ENCODE measurements at regions of chr1 and their contacts with region 1.

Region 1: DNA sequence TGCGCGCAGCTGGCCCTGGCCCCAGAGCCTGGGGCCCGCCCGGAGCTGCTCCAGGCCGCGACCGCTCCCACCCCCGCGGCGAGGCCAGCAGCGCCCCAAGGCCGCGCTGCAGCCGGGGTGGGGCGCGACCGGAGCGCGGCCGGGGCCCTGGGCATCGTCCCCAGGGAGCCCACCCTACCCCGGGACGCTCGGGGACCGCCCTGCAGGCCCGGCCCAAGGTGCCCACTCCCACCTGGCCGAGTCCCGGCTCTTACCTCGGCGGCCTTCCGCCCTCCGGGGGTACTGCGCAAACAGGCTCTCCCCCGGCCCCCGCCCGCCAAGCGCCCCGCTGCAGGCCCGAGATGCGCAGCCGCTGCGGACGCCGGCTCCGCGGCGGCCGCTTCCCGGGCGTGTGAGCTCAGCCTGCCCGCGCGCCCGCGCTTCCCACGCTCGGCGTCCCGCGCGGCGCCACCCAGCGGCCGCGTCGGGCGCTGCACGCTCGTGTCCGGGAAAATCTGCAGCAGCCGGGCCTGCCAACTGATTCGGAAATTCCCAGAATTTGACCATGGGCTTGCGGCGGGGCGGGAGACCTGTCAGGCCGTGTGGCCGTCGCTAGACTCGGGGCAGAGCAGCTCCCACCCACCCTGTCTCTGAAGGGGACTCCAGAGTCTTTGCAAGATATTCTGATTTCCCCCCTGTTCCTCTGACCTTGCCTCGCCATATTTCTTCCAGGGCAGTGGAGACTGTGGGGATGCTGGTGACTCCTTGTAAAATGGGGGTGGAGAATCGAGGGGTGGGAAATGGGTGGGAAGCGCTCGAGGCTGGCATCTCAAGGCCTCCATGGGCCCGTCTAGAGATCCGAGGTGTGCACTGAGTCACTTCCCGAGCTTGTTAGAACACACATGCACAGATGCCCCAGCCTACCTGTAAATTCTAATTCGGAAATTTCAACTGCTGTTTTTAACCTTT is 41.9 kb downstream of the CD34 start:
- DNase-seq: peak; percentile 92
- ATAC-seq: peak; percentile 65

Region 2: DNA sequence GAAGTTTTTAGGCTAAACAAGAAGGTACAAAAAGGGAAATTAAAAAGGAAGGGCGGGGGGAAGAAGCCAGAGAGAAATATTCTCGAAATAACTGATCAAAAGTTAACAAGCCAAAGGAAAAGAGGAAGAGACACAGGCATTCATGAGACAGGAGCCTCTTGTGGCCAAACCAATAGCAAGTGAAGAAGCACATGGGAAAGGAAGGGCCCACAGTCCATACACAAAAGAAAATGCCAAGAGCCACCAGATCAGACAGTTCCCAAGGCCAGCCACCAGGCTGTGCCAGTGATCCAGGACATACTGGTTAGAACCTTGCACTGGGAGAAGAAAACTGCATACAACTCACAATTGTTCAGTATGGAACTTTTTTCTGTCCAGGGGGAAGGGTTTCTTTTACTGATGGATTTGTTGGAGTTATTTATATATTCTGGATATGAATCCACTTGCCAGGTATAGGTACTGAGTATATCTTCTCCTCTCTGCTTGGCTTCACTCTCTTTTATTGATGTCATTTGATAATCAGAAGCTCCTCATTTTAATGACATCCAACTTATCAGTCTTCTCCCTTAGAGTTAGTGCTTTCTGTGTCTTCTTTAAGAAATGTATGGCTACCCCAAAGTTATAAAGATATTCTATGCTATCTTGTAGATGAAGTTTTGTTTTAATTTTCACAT is 40.4 kb before region 1 on chr1:
- intact Hi-C with region 1: loop called (anchors 2 kb)
- DNase-seq: peak; percentile 84
- ATAC-seq: peak; percentile 50

Region 3: GRCh38 chr1:207910591-207911354 is 41.7 kb after region 1 on chr1 and contains the start of gene CD34:
- intact Hi-C with region 1: no loop called
- DNase-seq: peak; percentile 85
- ATAC-seq: peak; percentile 79
- total RNA-seq, gene CD34: 72.1 TPM

Region 4: GRCh38 chr1:208445758-208446203 is 576.7 kb after region 1 on chr1:
- intact Hi-C with region 1: no loop called
- DNase-seq: no peak
- ATAC-seq: no peak